RWPE1 (cell line): ENCODE measurements at regions of chr6 and their contacts with region 1.

Region 1: GRCh38 chr6:33271458-33272274 is at the starts of genes RPS18 and VPS52:
- DNase-seq: peak; percentile 87
- H3K27ac ChIP-seq: peak within 1 kb of the TSS; percentile 90
- CTCF ChIP-seq: no peak

Region 2: GRCh38 chr6:33208091-33208967 is 63.3 kb before region 1 on chr6 and contains the start of gene RING1:
- CTCF ChIA-PET with region 1: no interaction called
- POLR2A ChIA-PET with region 1: no interaction called
- DNase-seq: peak; percentile 84
- H3K27ac ChIP-seq: peak within 1 kb of the TSS; percentile 95
- CTCF ChIP-seq: no peak

Region 3: GRCh38 chr6:33288921-33289748 is 17.5 kb after region 1 on chr6 and contains the starts of genes PFDN6 and WDR46:
- CTCF ChIA-PET with region 1: interaction called, 6 read pairs
- POLR2A ChIA-PET with region 1: interaction called, 10 read pairs
- DNase-seq: peak; percentile 96
- H3K27ac ChIP-seq: peak within 1 kb of the TSS; percentile 76
- CTCF ChIP-seq: no peak